Spleen (tissue), 13 donors: ENCODE measurements at regions of chr7 and their contacts with region 1.

Region 1: GRCh38 chr7:95916573-95917297 is 144.4 kb downstream of the DYNC1I1 start:
- DNase-seq: peak; percentile 83
- H3K4me3 ChIP-seq: peak overlapping the region in 2 of 8 donors; percentile 26 to 44
- H3K27ac ChIP-seq: no peak overlapping the region
- H3K4me1 ChIP-seq: peaks cover 0 to 6% (median 2%) of the 10 kb centered on the region in 6 donors
- H3K27me3 ChIP-seq: peaks cover 0 to 10% (median 0%) of the 10 kb centered on the region in 7 donors
- CTCF ChIP-seq: peak; percentile 66 to 93 (median 87)
- POLR2A ChIP-seq: no peak

Region 2: DNA sequence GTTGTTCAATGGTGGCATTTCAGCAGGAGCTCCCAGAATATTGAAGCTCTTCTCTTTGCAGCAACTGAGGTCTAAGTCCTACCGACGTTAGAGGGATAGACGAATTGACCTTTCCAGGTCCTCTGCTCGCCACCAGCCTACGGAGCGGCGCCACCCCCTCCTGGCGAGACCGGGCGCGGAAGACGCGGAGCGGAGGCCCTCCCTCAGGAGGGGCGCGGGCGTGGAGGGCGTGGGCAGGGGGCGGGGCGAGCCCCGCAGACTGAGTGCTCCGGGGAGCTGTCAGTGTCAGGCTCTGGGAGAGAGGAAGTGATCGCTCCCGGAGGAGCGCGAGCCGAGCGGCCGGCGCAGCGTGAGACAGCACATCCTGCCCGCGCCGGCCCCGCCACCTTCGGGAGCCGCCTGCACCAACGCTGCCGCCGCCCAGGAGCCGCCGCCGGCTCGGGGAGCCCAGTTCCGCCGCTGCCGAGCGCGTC is 144.4 kb before region 1 on chr7 and contains the start of gene DYNC1I1:
- intact Hi-C with region 1: no loop called
- DNase-seq: peak; percentile 85
- H3K4me3 ChIP-seq: peak within 1 kb of the TSS; percentile 22 to 78 (median 54)
- H3K27ac ChIP-seq: peak within 1 kb of the TSS in 4 of 8 donors; percentile 10 to 52 (median 33)
- H3K4me1 ChIP-seq: peaks cover 0 to 14% (median 8%) of the 10 kb centered on the region in 6 donors
- H3K27me3 ChIP-seq: peaks cover 0 to 31% (median 9%) of the 10 kb centered on the region in 7 donors
- CTCF ChIP-seq: no peak
- POLR2A ChIP-seq: no peak
- total RNA-seq, gene DYNC1I1: 0.81 to 7.5 (median 1.5) TPM

Region 3: GRCh38 chr7:95980167-95980566 is 63.4 kb after region 1 on chr7:
- intact Hi-C with region 1: no loop called
- DNase-seq: no peak
- H3K4me3 ChIP-seq: no peak overlapping the region
- H3K27ac ChIP-seq: no peak overlapping the region
- H3K4me1 ChIP-seq: no peaks in the 10 kb centered on the region
- H3K27me3 ChIP-seq: no peaks in the 10 kb centered on the region
- CTCF ChIP-seq: no peak
- POLR2A ChIP-seq: no peak

Region 4: GRCh38 chr7:97027427-97028234 is 1110.9 kb after region 1 on chr7:
- intact Hi-C with region 1: loop called (anchors 5 kb)
- DNase-seq: peak; percentile 86
- H3K4me3 ChIP-seq: peak overlapping the region; percentile 1 to 65 (median 33)
- H3K27ac ChIP-seq: no peak overlapping the region
- H3K4me1 ChIP-seq: peaks cover 15 to 49% (median 26%) of the 10 kb centered on the region in 6 donors
- H3K27me3 ChIP-seq: peaks cover 0 to 95% (median 48%) of the 10 kb centered on the region in 7 donors
- CTCF ChIP-seq: peak; percentile 67 to 88 (median 80)
- POLR2A ChIP-seq: no peak

Region 5: DNA sequence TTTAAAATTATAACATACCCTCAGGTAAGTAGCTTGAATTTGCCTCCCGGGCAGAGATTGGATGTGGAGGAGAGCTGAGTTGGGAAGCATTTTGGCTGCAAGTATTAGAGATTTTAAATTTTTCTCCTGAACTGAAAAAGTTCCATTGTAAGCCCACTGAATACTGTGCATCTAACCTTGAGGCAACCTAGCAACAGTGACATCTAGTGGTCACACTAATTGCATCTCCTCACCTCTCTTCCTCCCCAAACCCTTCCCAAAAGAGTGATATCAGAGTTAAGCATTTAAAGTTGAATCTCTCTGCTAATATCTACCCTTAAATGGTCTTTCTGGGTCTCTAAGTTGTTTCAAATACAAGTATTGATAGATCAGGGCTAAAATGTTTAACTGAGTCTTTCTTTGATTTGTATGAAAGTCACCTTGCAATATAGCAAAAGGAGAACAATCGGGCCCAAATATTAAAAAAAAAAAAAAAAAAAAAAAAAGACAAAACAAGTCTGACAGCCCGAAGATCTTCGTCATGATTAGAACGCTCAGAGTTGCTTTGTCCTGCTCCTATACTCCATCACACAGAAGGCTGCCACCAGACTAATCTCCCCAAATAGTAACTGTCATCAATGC is 1148.3 kb after region 1 on chr7:
- intact Hi-C with region 1: loop called (anchors 10 kb)
- DNase-seq: no peak
- H3K4me3 ChIP-seq: no peak overlapping the region
- H3K27ac ChIP-seq: no peak overlapping the region
- H3K4me1 ChIP-seq: no peaks in the 10 kb centered on the region
- H3K27me3 ChIP-seq: no peaks in the 10 kb centered on the region
- CTCF ChIP-seq: peak; percentile 13 to 72 (median 49)
- POLR2A ChIP-seq: no peak

Region 6: DNA sequence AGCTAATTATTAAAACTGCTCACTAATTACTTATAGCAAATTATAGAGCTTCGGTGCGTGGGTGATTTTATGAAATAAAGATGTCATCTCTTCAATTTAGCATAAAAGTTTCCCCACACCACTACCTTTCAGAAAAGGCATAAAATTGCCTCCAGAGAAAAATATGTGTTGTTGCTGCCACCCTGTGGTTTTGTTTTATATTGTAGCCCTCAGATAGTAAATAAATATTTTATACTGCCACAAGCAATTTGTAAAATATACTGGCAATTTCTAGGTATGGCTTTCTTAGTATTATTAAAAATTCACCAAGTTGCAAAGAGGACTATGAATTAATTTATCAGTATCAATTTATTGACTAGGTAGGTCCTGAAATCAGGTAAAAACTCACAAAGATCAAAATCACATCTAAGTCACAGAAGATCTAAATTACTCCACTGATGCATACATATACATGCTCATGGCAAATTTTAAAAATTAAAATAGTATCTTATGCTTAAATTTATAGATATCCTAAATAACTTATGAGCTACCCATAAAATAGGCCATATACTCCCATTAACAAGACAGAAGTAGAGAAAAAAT is 1929.0 kb after region 1 on chr7:
- intact Hi-C with region 1: loop called (anchors 10 kb)
- DNase-seq: no peak
- H3K4me3 ChIP-seq: no peak overlapping the region
- H3K27ac ChIP-seq: no peak overlapping the region
- H3K4me1 ChIP-seq: no peaks in the 10 kb centered on the region
- H3K27me3 ChIP-seq: no peaks in the 10 kb centered on the region
- CTCF ChIP-seq: peak in 5 of 11 experiments; percentile 18 to 36 (median 32)
- POLR2A ChIP-seq: no peak